Calu3 (cell line): ENCODE measurements at regions of chr3 and their contacts with region 1.

Region 1: GRCh38 chr3:143972505-143973255 is 1.1 kb downstream of the DIPK2A start:
- DNase-seq: peak; percentile 81
- H3K4me3 Mint-ChIP-seq: peak overlapping the region; percentile 91
- H3K27ac Mint-ChIP-seq: peak overlapping the region; percentile 87
- H3K4me1 Mint-ChIP-seq: peaks cover 26% of the 10 kb centered on the region
- H3K27me3 Mint-ChIP-seq: no peaks in the 10 kb centered on the region
- CTCF ChIP-seq: peak; percentile 48

Region 2: DNA sequence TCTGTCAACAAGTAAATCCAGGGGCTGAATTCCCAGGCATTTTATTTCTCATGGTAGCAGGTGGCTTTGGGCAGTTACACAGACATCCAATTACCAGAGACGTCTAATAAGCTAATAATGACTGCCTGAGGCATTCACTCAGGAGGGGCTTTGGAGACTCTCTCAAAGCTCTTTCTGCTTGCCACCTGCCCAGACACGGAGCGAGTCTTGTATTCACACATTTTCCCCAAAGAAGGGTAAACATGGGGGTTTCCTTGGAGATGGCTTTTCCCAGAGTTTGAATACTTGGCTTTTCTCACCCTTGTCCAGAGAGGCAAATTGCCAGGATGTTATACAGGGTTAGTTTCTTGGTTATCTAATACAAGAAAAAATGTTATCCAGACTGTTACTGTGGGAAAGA is 131.5 kb after region 1 on chr3:
- CTCF ChIA-PET with region 1: interaction called, 5 read pairs
- intact Hi-C with region 1: loop called (anchors 2 kb)
- DNase-seq: no peak
- H3K4me3 Mint-ChIP-seq: no peak overlapping the region
- H3K27ac Mint-ChIP-seq: no peak overlapping the region
- H3K4me1 Mint-ChIP-seq: peaks cover 9% of the 10 kb centered on the region
- H3K27me3 Mint-ChIP-seq: no peaks in the 10 kb centered on the region
- CTCF ChIP-seq: no peak

Region 3: GRCh38 chr3:144362126-144362525 is 389.4 kb after region 1 on chr3:
- CTCF ChIA-PET with region 1: interaction called, 5 read pairs
- intact Hi-C with region 1: loop called (anchors 2 kb)
- DNase-seq: peak; percentile 46
- H3K4me3 Mint-ChIP-seq: no peak overlapping the region
- H3K27ac Mint-ChIP-seq: peak overlapping the region; percentile 63
- H3K4me1 Mint-ChIP-seq: peaks cover 43% of the 10 kb centered on the region
- H3K27me3 Mint-ChIP-seq: no peaks in the 10 kb centered on the region
- CTCF ChIP-seq: no peak

Region 4: GRCh38 chr3:144708437-144708836 is 735.8 kb after region 1 on chr3:
- CTCF ChIA-PET with region 1: no interaction called
- intact Hi-C with region 1: loop called (anchors 5 kb)
- DNase-seq: no peak
- H3K4me3 Mint-ChIP-seq: no peak overlapping the region
- H3K27ac Mint-ChIP-seq: no peak overlapping the region
- H3K4me1 Mint-ChIP-seq: no peaks in the 10 kb centered on the region
- H3K27me3 Mint-ChIP-seq: no peaks in the 10 kb centered on the region
- CTCF ChIP-seq: no peak

Region 5: GRCh38 chr3:145767909-145768308 is 1795.2 kb after region 1 on chr3:
- CTCF ChIA-PET with region 1: no interaction called
- intact Hi-C with region 1: loop called (anchors 5 kb)
- DNase-seq: no peak
- H3K4me3 Mint-ChIP-seq: no peak overlapping the region
- H3K27ac Mint-ChIP-seq: no peak overlapping the region
- H3K4me1 Mint-ChIP-seq: no peaks in the 10 kb centered on the region
- H3K27me3 Mint-ChIP-seq: no peaks in the 10 kb centered on the region
- CTCF ChIP-seq: no peak